Mammary epithelial cell (primary cell): ENCODE measurements at regions of chr14 and their contacts with region 1.

Region 1: GRCh38 chr14:69629225-69630127 is 18.1 kb downstream of the SUSD6 start:
- DNase-seq: no peak
- H3K4me3 ChIP-seq: no peak overlapping the region
- H3K27ac ChIP-seq: no peak overlapping the region
- H3K4me1 ChIP-seq: peaks cover 41% of the 10 kb centered on the region
- H3K27me3 ChIP-seq: no peaks in the 10 kb centered on the region
- CTCF ChIP-seq: no peak

Region 2: GRCh38 chr14:69543341-69544249 is 85.9 kb before region 1 on chr14:
- CTCF ChIA-PET with region 1: no interaction called
- dilution Hi-C with region 1: loop called (anchors 5 kb)
- in situ Hi-C with region 1: no loop called
- intact Hi-C with region 1: no loop called
- DNase-seq: peak; percentile 97
- H3K4me3 ChIP-seq: no peak overlapping the region
- H3K27ac ChIP-seq: no peak overlapping the region
- H3K4me1 ChIP-seq: peaks cover 16% of the 10 kb centered on the region
- H3K27me3 ChIP-seq: no peaks in the 10 kb centered on the region
- CTCF ChIP-seq: no peak

Region 3: DNA sequence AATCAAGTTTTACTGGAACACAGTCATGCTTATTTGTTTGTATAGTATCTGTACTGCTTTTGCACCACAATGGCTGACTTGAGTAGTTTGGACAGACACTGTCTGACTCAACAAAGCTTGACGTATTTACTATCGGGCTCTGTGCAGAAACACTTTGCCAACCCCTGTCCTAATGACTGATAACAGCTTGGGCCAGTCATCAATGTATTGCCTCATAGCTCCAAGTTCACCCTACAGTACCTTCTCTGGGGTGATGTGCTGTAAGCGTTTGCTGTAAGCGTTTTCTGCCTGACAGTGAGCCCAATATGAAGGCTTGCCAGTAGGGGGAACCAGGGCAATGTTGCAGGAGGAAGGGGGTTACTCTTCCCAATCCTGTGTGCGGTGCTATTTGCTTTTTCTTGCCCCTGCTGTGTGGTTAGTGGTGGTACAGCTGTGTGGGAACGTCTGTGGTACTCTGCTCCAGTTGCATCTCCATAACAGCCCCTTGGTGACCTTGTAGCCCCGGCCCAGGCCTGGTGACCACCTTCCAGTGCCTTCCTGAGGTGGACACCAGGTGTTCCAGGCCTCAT is 49.4 kb before region 1 on chr14:
- CTCF ChIA-PET with region 1: no interaction called
- dilution Hi-C with region 1: loop called (anchors 5 kb)
- in situ Hi-C with region 1: no loop called
- intact Hi-C with region 1: no loop called
- DNase-seq: peak; percentile 83
- H3K4me3 ChIP-seq: no peak overlapping the region
- H3K27ac ChIP-seq: no peak overlapping the region
- H3K4me1 ChIP-seq: no peaks in the 10 kb centered on the region
- H3K27me3 ChIP-seq: no peaks in the 10 kb centered on the region
- CTCF ChIP-seq: peak; percentile 24 to 47